Activated T-helper 1 cell treated with anti-CD3 and anti-CD28 coated beads, Interleukin-12 subunit alpha, Interleukin-12 subunit beta, Interleukin-2, Interleukin-4 antibody, amounts not matched to agents 30 ng/mL and 10 ng/mL and 1 ng/mL, durations not matched to agents 14 hours and 24 hours and 36 hours (primary cell): ENCODE measurements at regions of chr7 and their contacts with region 1.

Region 1: GRCh38 chr7:54758702-54759592 is at the start of gene SEC61G:
- DNase-seq: peak; percentile 95
- H3K4me3 Mint-ChIP-seq: peak within 1 kb of the TSS; percentile 100
- H3K27ac Mint-ChIP-seq: peak within 1 kb of the TSS; percentile 97
- H3K4me1 Mint-ChIP-seq: peaks cover 54% of the 10 kb centered on the region
- H3K27me3 Mint-ChIP-seq: peaks cover 11% of the 10 kb centered on the region
- total RNA-seq, gene SEC61G: 160 and 168 TPM in 2 replicates

Region 2: GRCh38 chr7:54743580-54743979 is 15.4 kb before region 1 on chr7:
- intact Hi-C with region 1: no loop called
- DNase-seq: no peak
- H3K4me3 Mint-ChIP-seq: no peak overlapping the region
- H3K27ac Mint-ChIP-seq: no peak overlapping the region
- H3K4me1 Mint-ChIP-seq: peaks cover 5% of the 10 kb centered on the region
- H3K27me3 Mint-ChIP-seq: no peaks in the 10 kb centered on the region

Region 3: DNA sequence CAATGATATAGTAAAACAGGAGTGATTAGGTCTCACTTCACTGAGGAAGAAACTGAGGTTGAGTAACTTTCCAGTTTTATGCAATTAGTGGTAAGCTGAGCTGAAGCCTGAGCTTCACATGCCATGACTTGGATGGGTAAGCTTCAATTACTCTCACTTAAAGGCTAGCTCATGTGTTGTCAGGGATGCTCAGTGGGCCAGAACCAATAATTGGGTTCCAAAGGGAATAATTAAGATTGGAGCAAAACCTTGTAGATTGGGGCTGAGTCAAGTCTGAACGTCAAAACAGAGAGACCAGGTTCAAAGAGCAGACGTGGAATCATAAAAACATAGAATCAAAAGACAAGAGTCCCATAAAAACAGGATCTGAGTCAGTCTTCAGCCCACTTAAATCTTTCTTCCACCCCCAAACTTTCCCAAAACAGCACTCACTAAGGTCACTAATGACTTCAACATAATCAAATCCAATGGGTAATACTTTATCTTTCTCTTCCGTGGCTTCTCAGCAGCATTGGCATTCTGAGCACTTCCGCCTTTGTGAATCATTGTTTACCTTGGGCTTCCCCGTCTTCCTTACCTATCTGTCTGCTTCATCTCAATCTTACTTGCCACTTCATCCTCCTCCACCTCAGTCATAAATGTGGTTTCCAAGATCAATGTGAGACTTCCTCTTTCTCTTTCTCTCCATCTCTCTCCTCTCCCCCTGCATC is 236.8 kb after region 1 on chr7:
- intact Hi-C with region 1: loop called (anchors 2 kb)
- DNase-seq: peak; percentile 32
- H3K4me3 Mint-ChIP-seq: peak overlapping the region; percentile 19
- H3K27ac Mint-ChIP-seq: peak overlapping the region; percentile 70
- H3K4me1 Mint-ChIP-seq: peaks cover 26% of the 10 kb centered on the region
- H3K27me3 Mint-ChIP-seq: peaks cover 10% of the 10 kb centered on the region

Region 4: GRCh38 chr7:55309040-55309991 is 550.4 kb after region 1 on chr7:
- intact Hi-C with region 1: loop called (anchors 1 kb)
- DNase-seq: peak; percentile 61
- H3K4me3 Mint-ChIP-seq: peak overlapping the region; percentile 20
- H3K27ac Mint-ChIP-seq: peak overlapping the region; percentile 93
- H3K4me1 Mint-ChIP-seq: peaks cover 36% of the 10 kb centered on the region
- H3K27me3 Mint-ChIP-seq: peaks cover 20% of the 10 kb centered on the region

Region 5: GRCh38 chr7:55572378-55573233 is 813.7 kb after region 1 on chr7 and contains the start of gene VOPP1:
- intact Hi-C with region 1: loop called (anchors 1 kb)
- DNase-seq: peak; percentile 57
- H3K4me3 Mint-ChIP-seq: peak within 1 kb of the TSS; percentile 94
- H3K27ac Mint-ChIP-seq: peak within 1 kb of the TSS; percentile 92
- H3K4me1 Mint-ChIP-seq: peaks cover 68% of the 10 kb centered on the region
- H3K27me3 Mint-ChIP-seq: no peaks in the 10 kb centered on the region
- total RNA-seq, gene VOPP1: 96.3 and 102 TPM in 2 replicates

Region 6: GRCh38 chr7:55951637-55952351 is 1192.8 kb after region 1 on chr7 and contains the start of gene MRPS17:
- intact Hi-C with region 1: loop called (anchors 5 kb)
- DNase-seq: peak; percentile 92
- H3K4me3 Mint-ChIP-seq: peak within 1 kb of the TSS; percentile 92
- H3K27ac Mint-ChIP-seq: peak within 1 kb of the TSS; percentile 92
- H3K4me1 Mint-ChIP-seq: peaks cover 10% of the 10 kb centered on the region
- H3K27me3 Mint-ChIP-seq: no peaks in the 10 kb centered on the region
- total RNA-seq, gene MRPS17: 38.2 and 39.3 TPM in 2 replicates